Posterior cingulate gyrus (tissue), 11 donors: ENCODE measurements at regions of chr19 and their contacts with region 1.

Region 1: GRCh38 chr19:35135389-35135909 is 590 bp upstream of the LGI4 start:
- DNase-seq: peak in 9 of 10 donors; percentile 79 to 97 (median 84)

Region 2: DNA sequence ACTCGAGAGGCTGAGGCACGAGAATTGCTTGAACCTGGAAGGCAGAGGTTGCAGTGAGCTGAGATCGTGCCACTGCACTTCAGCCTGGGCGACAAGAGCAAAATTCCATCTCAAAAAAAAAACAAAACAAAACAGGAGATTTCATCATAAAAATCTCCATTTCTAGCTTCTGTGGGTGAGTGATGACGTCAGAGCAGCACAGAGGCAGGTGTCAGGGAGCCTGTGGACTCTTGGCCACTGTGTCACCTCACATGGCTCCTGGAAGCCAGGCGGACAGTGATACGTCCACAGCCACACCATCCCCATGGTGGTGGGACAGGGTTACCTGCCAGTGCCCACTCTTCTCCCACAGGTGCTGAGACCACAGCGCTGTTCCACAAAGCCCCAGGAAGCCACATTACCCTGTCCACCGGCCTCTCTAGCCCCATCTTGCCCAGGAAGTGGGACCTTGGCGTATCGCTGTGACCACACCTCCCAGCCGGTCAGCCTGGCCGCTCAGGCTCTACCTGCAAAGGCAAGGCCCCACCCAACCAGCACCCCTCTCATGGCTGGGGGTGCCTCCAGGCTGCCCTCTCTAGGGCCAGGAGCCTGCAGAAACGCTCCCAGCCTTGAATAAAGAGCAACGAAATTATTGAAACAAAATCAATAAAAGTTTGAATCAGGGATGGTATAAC is 22.3 kb before region 1 on chr19:
- intact Hi-C with region 1: loop called (anchors 1 kb)
- DNase-seq: no peak

Region 3: GRCh38 chr19:35168207-35168606 is 32.8 kb after region 1 on chr19:
- intact Hi-C with region 1: no loop called
- DNase-seq: no peak